ENCODE measurements at regions of chr9 and their contacts with region 1.

Region 1: DNA sequence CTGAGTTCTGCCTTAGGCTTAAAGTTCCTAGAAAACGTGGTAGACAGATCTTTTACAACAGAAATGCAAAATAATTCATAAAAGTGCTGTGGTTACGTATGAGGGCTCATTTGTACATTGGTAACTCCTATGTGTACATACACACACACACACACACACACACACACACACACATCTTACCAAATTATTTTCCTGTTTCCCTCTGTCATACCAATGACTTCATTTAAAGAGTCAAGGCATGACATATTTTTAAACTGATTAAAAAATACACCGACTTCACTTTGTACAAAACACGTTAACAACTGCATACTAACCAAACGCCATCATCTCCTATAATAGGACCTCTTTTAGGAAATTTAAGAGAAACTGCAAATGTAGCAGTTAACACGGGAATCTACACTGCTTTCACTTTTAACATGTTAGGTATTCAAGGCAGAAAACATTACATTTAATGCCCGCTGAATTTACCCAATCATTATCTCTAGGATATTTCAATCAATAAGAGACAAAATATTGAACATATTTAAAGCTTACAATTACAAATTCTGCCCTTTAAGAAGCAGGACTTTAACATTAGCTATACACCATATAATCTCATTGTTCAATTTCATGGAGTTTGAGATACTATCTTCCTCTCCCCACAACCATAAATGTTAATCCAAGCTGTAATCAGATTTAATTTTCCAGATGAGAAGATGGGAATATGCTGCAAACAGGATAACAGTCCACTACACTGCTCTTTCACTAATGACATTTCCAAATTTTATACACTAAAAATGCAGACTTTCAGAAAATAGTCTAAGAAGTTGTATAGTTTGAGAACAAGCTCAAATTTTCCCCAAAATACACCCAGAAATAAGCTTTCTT is 133.1 kb downstream of the DENND1A start:
- DNase-seq: no peak
- H3K4me3 ChIP-seq: no peak overlapping the region
- H3K27ac ChIP-seq: no peak overlapping the region
- H3K4me1 ChIP-seq: no peaks in the 10 kb centered on the region
- H3K27me3 ChIP-seq: no peaks in the 10 kb centered on the region
- CTCF ChIP-seq: no peak

Region 2: DNA sequence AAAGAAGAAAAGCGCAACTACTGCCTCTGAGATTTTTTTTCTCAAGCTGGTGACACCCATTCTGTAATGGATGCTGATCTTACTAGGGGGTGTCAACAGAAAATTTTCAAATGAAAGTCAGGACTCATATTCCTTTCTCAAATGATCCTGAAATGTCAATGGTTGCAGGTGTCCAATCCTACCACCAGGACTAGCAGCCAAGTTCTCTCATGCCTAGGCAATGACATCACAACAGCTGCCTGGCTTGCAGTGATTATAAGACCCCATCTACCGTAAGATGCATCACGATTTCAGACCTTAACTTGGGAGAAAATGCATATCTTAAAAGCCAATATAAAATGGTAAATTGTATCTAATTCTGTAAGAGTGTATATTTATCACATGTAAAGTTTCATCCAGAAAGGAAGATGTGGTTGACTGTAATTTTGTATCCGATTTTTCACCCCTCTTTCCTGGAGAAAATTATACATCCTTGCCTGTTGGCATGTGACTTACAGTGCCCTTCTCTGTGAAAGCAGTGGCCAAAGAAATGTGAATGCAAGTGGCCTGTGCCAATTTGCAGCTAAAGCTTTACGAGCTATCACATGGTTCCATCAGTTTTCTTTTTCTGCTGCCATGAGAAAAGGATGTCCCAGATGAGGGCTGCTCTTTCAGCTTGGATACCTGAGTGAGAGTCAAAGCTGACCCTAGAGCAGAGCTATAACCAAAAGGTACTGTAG is 28.6 kb after region 1 on chr9:
- CTCF ChIA-PET with region 1: no interaction called
- POLR2A ChIA-PET with region 1: interaction called, 10 read pairs
- intact Hi-C with region 1: no loop called
- DNase-seq: no peak
- H3K4me3 ChIP-seq: no peak overlapping the region
- H3K27ac ChIP-seq: no peak overlapping the region
- H3K4me1 ChIP-seq: no peaks in the 10 kb centered on the region
- H3K27me3 ChIP-seq: no peaks in the 10 kb centered on the region
- CTCF ChIP-seq: peak; percentile 25; the same call in 1 of the 2 replicates

Measured in PC-9 (cell line).